ENCODE measurements at regions of chr4 and their contacts with region 1.

Region 1: GRCh38 chr4:94406668-94407437 is 44.9 kb upstream of the PDLIM5 start:
- DNase-seq: peak; percentile 48
- H3K27ac ChIP-seq: no peak overlapping the region
- CTCF ChIP-seq: peak; percentile 93

Region 2: GRCh38 chr4:93994175-93994994 is 412.5 kb before region 1 on chr4:
- CTCF ChIA-PET with region 1: no interaction called
- POLR2A ChIA-PET with region 1: no interaction called
- DNase-seq: no peak
- H3K27ac ChIP-seq: no peak overlapping the region
- CTCF ChIP-seq: no peak

Region 3: DNA sequence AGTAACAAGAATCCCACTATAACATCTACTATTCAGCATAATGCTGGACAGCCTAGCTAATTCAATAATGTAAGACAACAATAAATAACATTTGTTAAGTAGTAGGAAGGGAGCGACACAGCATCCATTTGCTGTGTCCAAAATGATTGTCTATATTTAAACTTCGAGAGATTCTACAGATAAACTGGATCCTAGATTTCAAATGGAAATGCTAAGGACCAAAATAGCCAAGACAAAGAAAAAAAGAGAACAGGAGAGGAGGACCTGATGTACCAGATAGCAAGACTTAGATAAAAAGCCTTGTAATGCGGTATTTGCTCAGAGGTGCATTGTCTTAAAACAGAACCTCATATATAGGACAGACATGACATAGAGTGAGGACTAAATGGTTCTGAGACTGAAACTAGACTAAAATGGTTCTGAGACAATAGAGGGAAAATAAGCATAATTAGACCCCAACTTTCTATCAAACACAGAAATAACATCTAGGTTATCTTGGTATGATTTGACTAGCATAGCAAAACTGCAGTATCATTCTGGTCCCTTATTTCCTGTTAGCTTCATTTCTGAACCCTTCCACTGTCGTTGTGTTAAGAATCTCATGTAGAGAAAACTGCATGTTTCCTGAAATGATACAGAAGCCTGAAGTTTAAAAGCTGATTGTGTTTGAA is 68.0 kb before region 1 on chr4:
- CTCF ChIA-PET with region 1: no interaction called
- POLR2A ChIA-PET with region 1: no interaction called
- DNase-seq: no peak
- H3K27ac ChIP-seq: no peak overlapping the region
- CTCF ChIP-seq: no peak

Region 4: DNA sequence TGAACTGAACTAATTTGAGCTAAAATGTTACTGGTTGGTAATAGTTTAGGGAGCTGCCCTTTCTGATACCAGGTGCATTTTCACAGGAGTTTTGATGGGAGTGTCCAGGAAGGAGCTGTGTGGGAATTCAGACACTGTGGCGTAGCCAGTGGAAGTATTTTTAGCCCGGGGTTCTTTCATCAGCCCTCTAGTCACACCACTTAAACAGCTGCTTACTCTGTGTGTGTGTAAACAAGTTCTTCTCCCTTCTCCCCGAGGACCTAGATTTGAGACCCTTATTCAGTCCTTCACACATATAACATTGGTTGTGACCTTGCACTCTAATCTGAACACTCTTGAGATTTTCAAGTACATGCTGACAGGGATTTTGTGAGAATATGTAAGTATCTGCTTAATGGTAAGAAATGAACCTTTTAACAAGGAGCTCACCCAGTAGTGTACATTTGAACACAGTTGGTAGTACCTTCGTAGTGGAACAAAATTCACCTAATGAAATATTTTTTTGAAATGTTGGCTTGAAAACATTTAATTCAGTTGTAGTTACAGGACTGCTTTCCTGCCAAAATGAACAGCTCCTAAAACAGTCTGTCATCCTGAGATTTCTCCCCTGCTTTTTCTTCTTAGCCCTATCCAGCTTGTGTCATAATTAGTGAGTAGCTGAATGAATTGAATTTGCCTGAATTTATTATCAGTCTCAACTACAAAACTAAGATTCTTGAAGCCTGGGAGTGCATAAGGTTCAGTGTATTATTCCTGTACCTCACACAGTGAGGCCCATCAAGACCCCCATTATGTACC is 412.7 kb after region 1 on chr4:
- CTCF ChIA-PET with region 1: interaction called, 10 read pairs
- POLR2A ChIA-PET with region 1: no interaction called
- DNase-seq: no peak
- H3K27ac ChIP-seq: no peak overlapping the region
- CTCF ChIP-seq: no peak

Measured in RWPE1 (cell line).